GM12878 (cell line): ENCODE measurements at regions of chr9 and their contacts with region 1.

Region 1: DNA sequence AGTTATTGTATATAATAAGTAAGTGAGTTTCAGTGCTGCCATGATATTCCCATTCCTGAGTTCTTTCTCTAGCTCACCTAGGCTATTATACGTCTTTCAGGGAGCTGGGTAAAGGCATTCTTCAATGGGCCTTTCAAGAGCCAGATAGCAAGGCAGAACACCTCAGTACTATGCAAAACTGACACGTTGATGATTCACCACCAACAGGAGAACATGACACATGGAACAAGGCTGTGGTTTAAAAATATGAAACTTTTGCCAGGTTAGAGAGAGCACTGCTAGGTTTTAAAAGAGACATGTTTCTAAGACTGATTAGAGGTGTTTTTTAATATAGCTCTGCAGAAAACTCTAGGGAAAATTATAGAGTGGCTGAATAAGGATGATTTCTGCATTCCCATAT is 95.9 kb downstream of the UGCG start:
- DNase-seq: peak; percentile 77
- ATAC-seq: peak; percentile 86
- H3K4me3 ChIP-seq: no peak overlapping the region
- H3K27ac ChIP-seq: peak overlapping the region; percentile 89
- H3K4me1 ChIP-seq: peaks cover 54% of the 10 kb centered on the region
- H3K27me3 ChIP-seq: no peaks in the 10 kb centered on the region
- CTCF ChIP-seq: no peak
- EP300 ChIP-seq: peak; percentile 43 to 69; a peak in 3 of 4 replicates
- POLR2A ChIP-seq: no peak
- RAD21 ChIP-seq: no peak

Region 2: DNA sequence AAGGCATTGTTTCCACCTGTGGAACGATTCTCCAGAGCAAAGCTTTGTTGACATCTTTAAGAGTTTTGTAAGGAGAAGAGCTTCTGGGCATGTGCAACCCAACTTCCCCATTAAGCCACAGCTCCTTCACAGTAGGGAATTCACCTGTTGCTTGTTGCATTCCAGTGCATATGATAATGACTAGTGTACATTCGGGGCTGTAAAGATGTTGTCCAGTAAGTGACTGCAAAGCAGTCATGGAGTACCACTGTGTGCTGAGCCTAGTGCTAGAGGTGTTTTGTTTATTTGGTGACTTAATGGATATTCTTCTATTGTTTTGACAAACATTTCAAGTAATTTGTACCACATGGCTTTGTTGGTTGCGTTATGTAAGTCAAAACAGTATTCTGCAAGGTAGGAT is 83.1 kb before region 1 on chr9:
- CTCF ChIA-PET with region 1: no interaction called
- POLR2A ChIA-PET with region 1: interaction called, 5 read pairs
- RAD21 ChIA-PET with region 1: interaction called, 23 read pairs
- SMC1A ChIA-PET with region 1: interaction called, 24 read pairs
- in situ Hi-C with region 1: no loop called
- intact Hi-C with region 1: no loop called
- DNase-seq: no peak
- ATAC-seq: peak; percentile 65
- H3K4me3 ChIP-seq: peak overlapping the region; percentile 36; the same call in 1 of the 2 replicates
- H3K27ac ChIP-seq: peak overlapping the region; percentile 70; the same call in 1 of the 2 replicates
- H3K4me1 ChIP-seq: peaks cover 62% of the 10 kb centered on the region
- H3K27me3 ChIP-seq: no peaks in the 10 kb centered on the region
- CTCF ChIP-seq: no peak
- EP300 ChIP-seq: no peak
- POLR2A ChIP-seq: no peak
- RAD21 ChIP-seq: no peak

Region 3: GRCh38 chr9:111937781-111938426 is 54.6 kb before region 1 on chr9:
- CTCF ChIA-PET with region 1: interaction called, 4 read pairs
- POLR2A ChIA-PET with region 1: interaction called, 3 read pairs
- RAD21 ChIA-PET with region 1: interaction called, 24 read pairs
- SMC1A ChIA-PET with region 1: interaction called, 32 read pairs
- in situ Hi-C with region 1: no loop called
- intact Hi-C with region 1: no loop called
- DNase-seq: peak; percentile 74
- ATAC-seq: peak; percentile 90
- H3K4me3 ChIP-seq: no peak overlapping the region
- H3K27ac ChIP-seq: peak overlapping the region; percentile 80
- H3K4me1 ChIP-seq: peaks cover 21% of the 10 kb centered on the region
- H3K27me3 ChIP-seq: no peaks in the 10 kb centered on the region
- CTCF ChIP-seq: no peak
- EP300 ChIP-seq: peak; percentile 68 to 77; a peak in 2 of 4 replicates
- POLR2A ChIP-seq: no peak; the same call in none of the 2 replicates
- RAD21 ChIP-seq: no peak

Region 4: GRCh38 chr9:111975709-111976108 is 16.8 kb before region 1 on chr9:
- CTCF ChIA-PET with region 1: interaction called, 3 read pairs
- POLR2A ChIA-PET with region 1: interaction called, 4 read pairs
- RAD21 ChIA-PET with region 1: interaction called, 107 read pairs
- SMC1A ChIA-PET with region 1: interaction called, 136 read pairs
- in situ Hi-C with region 1: no loop called
- intact Hi-C with region 1: no loop called
- DNase-seq: peak; percentile 39
- ATAC-seq: peak; percentile 79
- H3K4me3 ChIP-seq: no peak overlapping the region
- H3K27ac ChIP-seq: no peak overlapping the region
- H3K4me1 ChIP-seq: peaks cover 12% of the 10 kb centered on the region
- H3K27me3 ChIP-seq: no peaks in the 10 kb centered on the region
- CTCF ChIP-seq: peak; percentile 4 to 51 (median 14); a peak in 2 of 6 replicates
- EP300 ChIP-seq: no peak
- POLR2A ChIP-seq: no peak
- RAD21 ChIP-seq: peak; percentile 57

Region 5: GRCh38 chr9:112028280-112029221 is 36.0 kb after region 1 on chr9:
- CTCF ChIA-PET with region 1: interaction called, 25 read pairs
- POLR2A ChIA-PET with region 1: interaction called, 158 read pairs
- RAD21 ChIA-PET with region 1: interaction called, 174 read pairs
- SMC1A ChIA-PET with region 1: interaction called, 313 read pairs
- in situ Hi-C with region 1: no loop called
- intact Hi-C with region 1: loop called (anchors 2 kb)
- DNase-seq: peak; percentile 98
- ATAC-seq: peak; percentile 63
- H3K4me3 ChIP-seq: peak overlapping the region; percentile 63
- H3K27ac ChIP-seq: peak overlapping the region; percentile 97
- H3K4me1 ChIP-seq: peaks cover 38% of the 10 kb centered on the region
- H3K27me3 ChIP-seq: no peaks in the 10 kb centered on the region
- CTCF ChIP-seq: no peak
- EP300 ChIP-seq: peak; percentile 98 to 99
- POLR2A ChIP-seq: peak; percentile 84
- RAD21 ChIP-seq: peak; percentile 41